ENCODE measurements at regions of chr2 and their contacts with region 1.

Region 1: DNA sequence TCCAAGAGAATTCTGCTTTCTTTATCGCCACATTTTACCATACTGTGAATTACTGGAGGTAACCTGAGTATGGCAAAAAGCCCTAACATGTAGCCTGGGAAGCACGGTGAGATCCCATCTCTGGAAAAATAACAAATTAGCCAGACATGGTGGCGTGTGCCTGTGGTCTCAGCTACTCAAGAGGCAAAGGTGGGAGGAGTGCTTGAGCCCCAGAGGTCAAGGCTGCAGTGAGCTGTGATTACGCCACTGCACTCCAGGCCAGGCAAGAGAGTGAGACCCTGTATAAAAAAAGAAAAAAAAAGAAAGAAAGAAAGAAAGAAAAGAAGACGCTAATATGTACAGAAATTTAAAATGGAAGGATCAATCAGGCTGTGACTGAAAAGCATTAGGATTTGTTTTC is 57.7 kb upstream of the SESTD1 start:
- H3K4me3 ChIP-seq: no peak overlapping the region
- H3K27ac ChIP-seq: no peak overlapping the region
- H3K4me1 ChIP-seq: no peaks in the 10 kb centered on the region
- CTCF ChIP-seq: no peak

Region 2: DNA sequence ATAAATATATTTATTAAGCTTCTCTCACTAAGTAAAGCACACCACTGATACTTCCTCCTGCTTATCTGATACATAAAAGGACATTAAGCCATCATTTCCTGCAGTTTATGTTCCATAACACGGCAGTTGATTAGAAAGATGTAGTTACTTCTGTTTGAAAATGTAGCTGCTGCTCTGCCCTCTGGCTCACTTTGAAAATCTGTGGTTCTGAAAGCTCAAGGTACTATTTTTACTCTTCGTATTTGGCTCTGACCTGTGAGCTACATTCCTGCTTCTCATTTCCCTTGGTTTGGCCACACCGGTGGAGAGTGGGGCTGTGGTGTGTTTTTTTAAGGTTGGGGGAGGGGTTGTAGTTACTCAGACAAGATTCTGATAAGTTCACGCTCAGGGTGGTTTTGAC is 502.3 kb before region 1 on chr2:
- CTCF ChIA-PET with region 1: interaction called, 11 read pairs
- POLR2A ChIA-PET with region 1: no interaction called
- H3K4me3 ChIP-seq: no peak overlapping the region
- H3K27ac ChIP-seq: no peak overlapping the region
- H3K4me1 ChIP-seq: no peaks in the 10 kb centered on the region
- CTCF ChIP-seq: no peak

Region 3: DNA sequence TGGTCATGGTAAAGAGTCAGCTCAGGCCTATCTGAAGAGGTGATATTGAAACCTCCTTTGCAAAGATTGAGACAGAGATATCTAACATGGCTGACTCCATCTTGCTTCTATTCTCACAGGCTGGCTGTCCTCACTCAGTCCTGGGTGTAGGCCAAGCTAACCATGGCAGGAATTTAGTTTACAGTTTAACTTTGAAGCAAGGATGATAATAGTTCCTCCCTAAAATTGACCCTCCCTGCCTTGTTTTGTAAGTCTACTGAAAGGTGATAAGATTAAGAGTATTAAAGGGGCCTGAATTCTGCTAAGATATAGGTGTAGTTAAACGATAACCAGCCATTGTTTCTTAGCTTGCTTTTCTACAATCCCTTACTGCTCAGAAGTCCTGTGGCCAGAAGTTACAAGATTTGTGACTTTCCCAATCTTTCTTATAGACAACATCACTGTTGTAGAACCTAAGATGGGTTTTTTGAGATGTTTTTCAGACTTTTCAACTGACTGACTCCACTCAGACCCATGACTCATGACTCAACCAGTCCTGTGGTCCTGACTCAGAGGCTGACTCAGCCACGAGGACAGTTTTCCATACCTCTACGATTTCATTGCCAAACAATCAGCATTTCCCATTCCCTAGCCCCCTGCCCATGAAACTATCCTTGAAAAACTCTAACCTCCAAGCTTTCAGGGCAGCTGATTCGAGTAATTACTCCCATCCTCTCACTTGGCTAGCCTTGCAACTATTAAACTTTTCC is 138.1 kb after region 1 on chr2:
- CTCF ChIA-PET with region 1: no interaction called
- POLR2A ChIA-PET with region 1: no interaction called
- H3K4me3 ChIP-seq: no peak overlapping the region
- H3K27ac ChIP-seq: no peak overlapping the region
- H3K4me1 ChIP-seq: no peaks in the 10 kb centered on the region
- CTCF ChIP-seq: no peak

Measured in HEK293 (cell line).